ENCODE measurements at regions of chr21 and their contacts with region 1.

Region 1: DNA sequence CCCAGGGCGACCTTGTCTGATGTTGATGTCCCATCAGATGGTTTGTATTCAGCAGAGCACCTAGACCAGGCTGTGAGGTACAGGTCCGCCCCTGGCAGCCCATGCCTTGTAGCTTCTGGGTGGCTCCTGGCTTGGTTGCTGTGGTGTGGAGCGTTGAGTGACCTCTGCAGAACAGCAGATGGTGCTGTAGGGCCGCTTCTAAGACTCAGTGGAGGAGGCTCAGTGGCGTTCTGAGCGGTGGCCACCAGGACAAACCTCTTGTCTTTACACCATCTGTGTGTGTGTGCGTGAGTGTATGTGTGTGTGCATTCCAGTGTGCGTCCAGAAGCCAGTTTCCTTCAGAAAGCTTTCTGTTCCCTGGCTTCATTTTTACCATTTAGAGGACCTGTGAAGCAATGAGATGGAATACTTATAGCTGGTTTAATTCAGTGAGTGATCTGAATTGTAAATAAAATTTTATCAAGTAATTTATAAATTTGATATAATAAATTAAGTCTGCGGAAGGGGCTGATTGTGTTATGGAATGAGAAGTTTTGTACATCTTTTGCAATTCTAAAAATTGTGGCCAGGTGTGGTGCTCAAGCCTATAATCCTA is 66.1 kb downstream of the ADARB1 start:
- DNase-seq: peak; percentile 88
- H3K4me3 ChIP-seq: no peak overlapping the region
- H3K27ac ChIP-seq: no peak overlapping the region
- H3K27me3 ChIP-seq: no peaks in the 10 kb centered on the region
- CTCF ChIP-seq: peak; percentile 96

Region 2: DNA sequence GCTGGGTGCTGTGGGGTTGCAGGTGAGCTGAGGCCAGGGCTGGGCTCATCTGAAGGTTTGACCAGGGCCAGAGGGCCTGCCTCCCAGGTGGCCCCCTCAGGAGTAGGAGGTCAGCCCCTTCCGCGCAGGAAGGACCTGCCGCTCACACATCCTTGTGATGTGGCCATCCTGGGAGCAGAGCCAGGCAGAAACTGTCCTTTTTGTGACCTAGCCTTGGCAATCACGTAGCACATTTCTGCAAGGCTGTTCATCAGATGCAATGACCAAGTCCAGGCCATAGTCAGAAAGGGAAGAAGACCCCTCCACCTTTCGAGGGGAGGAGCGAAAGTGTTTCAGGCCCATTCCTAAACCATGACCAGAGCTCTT is 1183.8 kb before region 1 on chr21:
- CTCF ChIA-PET with region 1: no interaction called
- POLR2A ChIA-PET with region 1: no interaction called
- DNase-seq: no peak
- H3K4me3 ChIP-seq: no peak overlapping the region
- H3K27ac ChIP-seq: no peak overlapping the region
- H3K27me3 ChIP-seq: no peaks in the 10 kb centered on the region
- CTCF ChIP-seq: no peak

Region 3: GRCh38 chr21:44817506-44817880 is 322.9 kb before region 1 on chr21:
- CTCF ChIA-PET with region 1: no interaction called
- POLR2A ChIA-PET with region 1: no interaction called
- DNase-seq: peak; percentile 67
- H3K4me3 ChIP-seq: peak overlapping the region; percentile 78
- H3K27ac ChIP-seq: no peak overlapping the region
- H3K27me3 ChIP-seq: no peaks in the 10 kb centered on the region
- CTCF ChIP-seq: no peak

Region 4: GRCh38 chr21:44939532-44940115 is 200.8 kb before region 1 on chr21 and contains the start of gene SLX9:
- CTCF ChIA-PET with region 1: interaction called, 202 read pairs
- POLR2A ChIA-PET with region 1: no interaction called
- DNase-seq: peak; percentile 47
- H3K4me3 ChIP-seq: peak within 1 kb of the TSS; percentile 96
- H3K27ac ChIP-seq: peak within 1 kb of the TSS; percentile 47
- H3K27me3 ChIP-seq: peaks cover 8% of the 10 kb centered on the region
- CTCF ChIP-seq: no peak
- polyA plus RNA-seq, gene SLX9: 11.4 and 11.9 TPM in 2 replicates

Region 5: DNA sequence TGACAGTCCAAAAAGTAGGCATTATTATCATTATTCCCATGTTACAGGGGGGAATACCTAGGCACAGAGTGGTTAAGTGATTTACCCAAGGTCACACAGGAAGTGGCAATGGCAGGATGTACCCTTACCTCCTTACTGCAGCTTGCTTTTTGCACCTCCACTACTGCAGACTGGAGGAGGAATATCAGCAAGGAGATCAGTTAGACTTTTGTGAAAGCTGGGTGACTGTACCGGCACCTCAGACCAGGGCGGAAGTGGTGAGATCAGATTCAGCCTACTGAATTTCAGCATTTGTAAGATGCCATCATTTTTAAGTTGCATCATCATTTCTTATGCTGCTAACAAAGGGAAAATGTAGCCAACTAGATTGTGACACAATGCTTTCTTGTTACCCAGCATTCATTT is 61.6 kb before region 1 on chr21:
- CTCF ChIA-PET with region 1: interaction called, 30 read pairs
- POLR2A ChIA-PET with region 1: no interaction called
- DNase-seq: peak; percentile 18
- H3K4me3 ChIP-seq: no peak overlapping the region
- H3K27ac ChIP-seq: no peak overlapping the region
- H3K27me3 ChIP-seq: no peaks in the 10 kb centered on the region
- CTCF ChIP-seq: no peak

Region 6: DNA sequence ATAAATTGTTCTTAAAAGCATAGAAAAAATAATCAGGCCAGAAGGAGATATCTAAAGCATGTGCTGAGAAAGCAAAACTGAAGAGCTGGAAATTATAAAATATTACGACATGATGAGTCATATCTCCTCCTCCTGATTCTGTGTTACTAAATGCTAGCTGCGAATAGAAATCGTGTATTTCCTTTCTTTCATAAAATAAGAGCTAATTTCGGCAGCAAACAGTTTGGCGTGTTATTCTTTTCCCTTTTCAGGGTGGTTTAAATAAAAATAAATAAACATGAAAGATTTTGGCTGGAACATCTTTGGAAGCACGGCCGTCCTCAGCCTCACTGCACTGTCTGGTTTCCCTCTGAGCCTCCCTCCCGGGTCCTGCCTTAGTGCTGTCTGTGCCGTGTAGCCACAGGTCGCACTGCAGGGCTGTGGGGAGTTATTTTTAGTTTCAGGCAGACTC is 10.1 kb before region 1 on chr21:
- CTCF ChIA-PET with region 1: interaction called, 33 read pairs
- POLR2A ChIA-PET with region 1: no interaction called
- DNase-seq: no peak
- H3K4me3 ChIP-seq: peak overlapping the region; percentile 55
- H3K27ac ChIP-seq: peak overlapping the region; percentile 71
- H3K27me3 ChIP-seq: no peaks in the 10 kb centered on the region
- CTCF ChIP-seq: no peak

Region 7: GRCh38 chr21:45167796-45168222 is 27.4 kb after region 1 on chr21:
- CTCF ChIA-PET with region 1: interaction called, 21 read pairs
- POLR2A ChIA-PET with region 1: no interaction called
- DNase-seq: no peak
- H3K4me3 ChIP-seq: no peak overlapping the region
- H3K27ac ChIP-seq: peak overlapping the region; percentile 84
- H3K27me3 ChIP-seq: no peaks in the 10 kb centered on the region
- CTCF ChIP-seq: peak; percentile 21; the same call in 1 of the 2 replicates

Region 8: GRCh38 chr21:45200581-45201296 is 60.3 kb after region 1 on chr21:
- CTCF ChIA-PET with region 1: no interaction called
- POLR2A ChIA-PET with region 1: no interaction called
- DNase-seq: no peak
- H3K4me3 ChIP-seq: no peak overlapping the region
- H3K27ac ChIP-seq: no peak overlapping the region
- H3K27me3 ChIP-seq: no peaks in the 10 kb centered on the region
- CTCF ChIP-seq: no peak

Region 9: DNA sequence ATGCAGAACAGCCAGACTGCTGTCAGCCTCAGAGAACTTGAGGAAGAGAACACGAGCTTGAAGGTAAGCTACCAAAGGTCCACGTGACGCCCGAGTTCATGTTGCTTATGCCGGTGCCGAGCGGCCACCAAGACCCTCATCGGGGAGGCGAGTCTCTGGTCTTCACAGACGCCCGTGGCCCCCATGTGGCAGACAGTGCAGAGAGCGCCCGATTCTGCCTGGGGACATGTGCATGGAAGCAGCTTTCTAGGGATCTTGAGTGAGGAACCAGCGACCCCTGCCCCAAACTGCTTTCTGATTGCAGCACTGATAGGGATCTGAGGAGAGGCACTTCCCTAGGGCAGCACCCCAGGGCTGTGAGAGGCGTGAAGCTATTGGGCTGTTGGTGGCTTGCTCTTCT is 1262.0 kb after region 1 on chr21:
- CTCF ChIA-PET with region 1: no interaction called
- POLR2A ChIA-PET with region 1: no interaction called
- DNase-seq: no peak
- H3K4me3 ChIP-seq: no peak overlapping the region
- H3K27ac ChIP-seq: no peak overlapping the region
- H3K27me3 ChIP-seq: no peaks in the 10 kb centered on the region
- CTCF ChIP-seq: no peak

Measured in AG04450 (cell line).